Right lobe of liver (tissue), 6 donors: ENCODE measurements at regions of chr9 and their contacts with region 1.

Region 1: GRCh38 chr9:133979273-133979920 is 12.7 kb downstream of the VAV2 start:
- DNase-seq: peak; percentile 78 to 84 (median 80)
- ATAC-seq: peak; percentile 71 to 78 (median 75)
- H3K4me3 ChIP-seq: peak overlapping the region in 2 of 3 donors; percentile 39
- H3K27ac ChIP-seq: peak overlapping the region; percentile 70 to 86 (median 80)
- H3K4me1 ChIP-seq: peaks cover 0 to 65% (median 27%) of the 10 kb centered on the region in 4 donors
- H3K27me3 ChIP-seq: no peaks in the 10 kb centered on the region
- CTCF ChIP-seq: no peak
- POLR2A ChIP-seq: no peak

Region 2: DNA sequence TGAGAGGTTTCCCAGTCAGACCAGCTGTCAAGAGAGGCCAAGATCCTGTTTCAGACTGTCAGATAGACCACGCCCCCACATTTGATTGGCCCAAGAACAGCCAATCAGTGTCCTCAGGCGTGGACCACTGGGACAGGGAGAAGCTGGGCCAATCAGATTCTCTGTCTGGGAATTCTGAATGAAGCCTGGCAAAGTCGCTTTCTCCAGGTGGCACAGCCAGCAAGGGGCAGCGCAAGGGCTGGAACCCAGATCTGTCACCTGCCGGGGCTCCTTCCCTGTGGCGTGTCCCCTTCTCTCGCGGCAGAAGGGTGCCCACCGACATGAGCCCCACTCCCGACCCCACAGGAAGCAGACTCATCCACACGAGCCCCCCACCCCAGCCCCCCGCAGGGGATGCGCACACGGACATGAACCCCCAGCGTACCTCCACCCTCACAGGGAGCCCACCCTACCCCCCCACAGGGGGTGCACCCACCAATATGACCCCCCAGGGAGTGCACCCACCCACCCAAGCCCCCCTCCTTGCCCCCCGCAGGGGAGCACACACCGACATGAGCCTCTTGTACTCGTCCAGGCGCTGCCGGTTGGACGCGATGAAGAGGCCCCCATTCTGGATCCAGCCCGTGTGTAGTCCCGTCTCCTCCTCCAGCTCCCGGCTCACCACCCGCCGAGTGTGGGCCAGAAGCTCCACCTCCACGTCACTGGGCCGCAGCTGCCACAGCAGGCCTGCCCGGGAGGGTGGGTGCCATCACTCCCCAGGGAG is 247.3 kb before region 1 on chr9:
- intact Hi-C with region 1: no loop called
- DNase-seq: peak in 2 of 3 donors; percentile 67 to 74
- ATAC-seq: peak; percentile 59 to 91 (median 73)
- H3K4me3 ChIP-seq: no peak overlapping the region
- H3K27ac ChIP-seq: no peak overlapping the region
- H3K4me1 ChIP-seq: peaks cover 0 to 18% (median 3%) of the 10 kb centered on the region in 4 donors
- H3K27me3 ChIP-seq: no peaks in the 10 kb centered on the region
- CTCF ChIP-seq: no peak
- POLR2A ChIP-seq: no peak

Region 3: GRCh38 chr9:133889584-133890301 is 89.7 kb before region 1 on chr9:
- intact Hi-C with region 1: loop called in 1 of 2 experiments (anchors 10 kb)
- DNase-seq: no peak
- ATAC-seq: peak in 1 of 4 donors; percentile 1
- H3K4me3 ChIP-seq: no peak overlapping the region
- H3K27ac ChIP-seq: peak overlapping the region in 2 of 3 donors; percentile 71 to 93
- H3K4me1 ChIP-seq: peaks cover 0 to 80% (median 40%) of the 10 kb centered on the region in 4 donors
- H3K27me3 ChIP-seq: no peaks in the 10 kb centered on the region
- CTCF ChIP-seq: no peak
- POLR2A ChIP-seq: no peak